ENCODE measurements at regions of chr7 and their contacts with region 1.

Region 1: GRCh38 chr7:21753071-21753470 is 192.6 kb downstream of the CDCA7L start:
- DNase-seq: no peak
- H3K4me3 ChIP-seq: no peak overlapping the region
- H3K27ac ChIP-seq: no peak overlapping the region
- H3K4me1 ChIP-seq: no peaks in the 10 kb centered on the region
- H3K27me3 ChIP-seq: peaks cover 0 to 2% (median 0%) of the 10 kb centered on the region in 5 experiments

Region 2: GRCh38 chr7:21172800-21173199 is 580.3 kb before region 1 on chr7:
- CTCF ChIA-PET with region 1: no interaction called
- POLR2A ChIA-PET with region 1: no interaction called
- DNase-seq: no peak
- H3K4me3 ChIP-seq: no peak overlapping the region
- H3K27ac ChIP-seq: no peak overlapping the region
- H3K4me1 ChIP-seq: no peaks in the 10 kb centered on the region
- H3K27me3 ChIP-seq: peaks cover 4 to 49% (median 14%) of the 10 kb centered on the region in 5 experiments

Region 3: DNA sequence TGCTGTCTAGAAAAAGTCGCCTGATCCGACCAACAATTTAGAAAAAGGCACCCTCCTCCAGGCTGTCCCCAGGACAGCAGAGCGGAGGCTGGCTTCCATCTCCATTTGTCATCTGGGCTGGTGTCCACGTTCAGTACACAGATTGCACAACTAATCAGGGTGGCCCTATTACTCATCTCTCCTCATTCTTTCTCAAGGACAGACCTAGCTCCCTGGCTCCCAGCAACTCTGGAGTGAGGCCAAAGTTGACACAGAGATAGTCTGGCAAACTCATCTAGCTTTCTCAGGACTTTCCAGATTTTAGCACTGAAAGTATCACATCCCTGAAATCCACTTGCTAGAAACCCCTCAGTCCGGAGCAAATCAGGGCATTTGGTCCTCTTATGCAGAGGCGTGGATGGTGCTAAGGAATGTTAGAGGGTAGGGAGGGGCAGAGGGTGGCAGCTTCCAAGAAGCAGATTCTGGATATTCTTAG is 135.1 kb before region 1 on chr7:
- CTCF ChIA-PET with region 1: no interaction called
- POLR2A ChIA-PET with region 1: no interaction called
- DNase-seq: no peak
- H3K4me3 ChIP-seq: no peak overlapping the region
- H3K27ac ChIP-seq: no peak overlapping the region
- H3K4me1 ChIP-seq: no peaks in the 10 kb centered on the region
- H3K27me3 ChIP-seq: no peaks in the 10 kb centered on the region

Region 4: GRCh38 chr7:21767300-21767900 is 14.3 kb after region 1 on chr7:
- CTCF ChIA-PET with region 1: interaction called, 12 read pairs
- POLR2A ChIA-PET with region 1: no interaction called
- DNase-seq: peak; percentile 70 to 75 (median 70)
- H3K4me3 ChIP-seq: no peak overlapping the region
- H3K27ac ChIP-seq: no peak overlapping the region
- H3K4me1 ChIP-seq: peaks cover 0 to 12% (median 4%) of the 10 kb centered on the region in 4 experiments
- H3K27me3 ChIP-seq: no peaks in the 10 kb centered on the region

Region 5: DNA sequence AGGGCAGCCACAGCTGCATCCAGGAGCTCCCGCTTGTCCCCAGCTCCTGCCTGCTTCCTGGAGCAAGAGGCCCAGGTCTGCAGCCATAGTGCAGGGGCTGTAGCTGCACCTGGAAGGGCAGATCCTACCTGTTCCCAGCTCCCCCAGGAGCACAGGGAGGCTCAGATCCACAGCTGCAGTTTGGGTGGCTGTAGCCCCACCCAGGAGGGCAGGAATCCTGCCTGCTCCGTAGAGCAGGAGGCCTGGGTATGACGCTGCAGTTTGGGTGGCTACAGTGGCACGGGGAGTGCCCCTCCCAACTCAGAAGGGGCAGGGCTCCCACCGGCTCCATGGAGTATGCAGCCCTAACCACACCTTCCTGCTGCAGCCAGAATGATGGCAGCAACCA is 219.3 kb after region 1 on chr7:
- CTCF ChIA-PET with region 1: no interaction called
- POLR2A ChIA-PET with region 1: no interaction called
- DNase-seq: peak; percentile 70 to 91 (median 88)
- H3K4me3 ChIP-seq: peak overlapping the region in 2 of 7 experiments; percentile 36 to 61
- H3K27ac ChIP-seq: no peak overlapping the region
- H3K4me1 ChIP-seq: peaks cover 0 to 22% (median 19%) of the 10 kb centered on the region in 4 experiments
- H3K27me3 ChIP-seq: no peaks in the 10 kb centered on the region